HCT116 (cell line): ENCODE measurements at regions of chr1 and their contacts with region 1.

Region 1: DNA sequence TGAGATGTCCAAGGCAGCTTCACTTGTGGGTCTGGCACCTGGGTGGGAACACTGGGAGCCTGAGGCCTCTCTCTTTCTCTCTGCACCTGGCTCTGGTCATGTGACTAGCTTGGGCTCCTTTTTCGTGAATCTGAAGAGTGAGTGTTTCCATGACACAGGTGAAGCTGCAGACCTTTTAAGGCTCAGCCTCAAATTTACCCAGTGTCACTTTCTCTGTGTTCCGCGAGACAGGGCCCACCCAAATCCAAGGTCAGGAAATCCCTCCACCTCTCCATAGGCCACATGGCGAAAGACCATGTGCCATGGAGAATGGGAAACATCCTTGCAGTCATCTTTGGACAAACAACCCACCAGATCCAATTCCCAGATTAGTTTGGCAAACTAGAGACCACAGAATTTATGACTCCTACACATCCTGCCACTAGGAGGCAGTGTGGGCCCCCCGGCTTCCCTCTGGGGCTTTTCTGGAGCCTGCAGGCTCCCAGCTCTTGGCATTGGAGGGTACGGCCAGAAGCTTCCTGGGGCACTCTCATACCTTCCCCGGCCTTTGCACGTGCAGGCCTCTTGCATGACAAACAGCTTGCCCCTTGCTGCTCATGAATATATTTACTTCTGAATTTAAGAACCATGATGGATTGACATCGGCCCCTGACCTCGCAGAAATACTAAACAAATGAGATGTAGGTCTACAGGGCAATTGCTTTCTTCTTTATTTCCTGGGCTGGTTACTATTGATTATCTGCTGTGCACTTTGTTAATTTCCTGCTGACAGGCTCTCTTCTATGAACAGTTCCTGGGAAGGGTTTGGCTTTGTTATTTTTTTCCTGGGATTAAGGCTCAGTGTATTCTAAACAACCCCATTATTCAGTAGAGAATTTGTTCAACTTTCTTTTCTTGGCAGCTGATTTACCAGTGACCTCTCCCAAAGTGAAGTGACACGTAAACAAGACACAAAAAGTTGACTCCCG is 180.7 kb downstream of the KAZN start:
- DNase-seq: peak; percentile 21
- ATAC-seq: peak; percentile 83
- H3K4me3 ChIP-seq: no peak overlapping the region
- H3K27ac ChIP-seq: no peak overlapping the region
- H3K4me1 ChIP-seq: no peaks in the 10 kb centered on the region
- H3K27me3 ChIP-seq: no peaks in the 10 kb centered on the region
- CTCF ChIP-seq: peak; percentile 74 to 92 (median 90)
- POLR2A ChIP-seq: no peak
- RAD21 ChIP-seq: peak; percentile 69

Region 2: GRCh38 chr1:14765773-14766172 is 13.4 kb before region 1 on chr1:
- CTCF ChIA-PET with region 1: interaction called, 12 read pairs
- POLR2A ChIA-PET with region 1: no interaction called
- RAD21 ChIA-PET with region 1: no interaction called
- intact Hi-C with region 1: no loop called
- DNase-seq: no peak
- ATAC-seq: peak; percentile 40; the same call in 1 of the 2 replicates
- H3K4me3 ChIP-seq: no peak overlapping the region
- H3K27ac ChIP-seq: no peak overlapping the region
- H3K4me1 ChIP-seq: peaks cover 0 to 5% of the 10 kb centered on the region in 2 experiments; a peak in 1 of 4 replicates
- H3K27me3 ChIP-seq: peaks cover 20% of the 10 kb centered on the region; the same call in 1 of the 2 replicates
- CTCF ChIP-seq: no peak
- POLR2A ChIP-seq: no peak
- RAD21 ChIP-seq: no peak

Region 3: GRCh38 chr1:15028102-15028501 is 248.9 kb after region 1 on chr1:
- CTCF ChIA-PET with region 1: interaction called, 12 read pairs
- POLR2A ChIA-PET with region 1: no interaction called
- RAD21 ChIA-PET with region 1: interaction called in 1 of 2 experiments, 3 read pairs
- intact Hi-C with region 1: loop called (anchors 2 kb)
- DNase-seq: no peak
- ATAC-seq: peak; percentile 34; the same call in 1 of the 2 replicates
- H3K4me3 ChIP-seq: no peak overlapping the region
- H3K27ac ChIP-seq: no peak overlapping the region
- H3K4me1 ChIP-seq: peaks cover 6 to 23% of the 10 kb centered on the region in 2 experiments; a peak in 3 of 4 replicates
- H3K27me3 ChIP-seq: no peaks in the 10 kb centered on the region
- CTCF ChIP-seq: no peak
- POLR2A ChIP-seq: no peak
- RAD21 ChIP-seq: no peak

Region 4: DNA sequence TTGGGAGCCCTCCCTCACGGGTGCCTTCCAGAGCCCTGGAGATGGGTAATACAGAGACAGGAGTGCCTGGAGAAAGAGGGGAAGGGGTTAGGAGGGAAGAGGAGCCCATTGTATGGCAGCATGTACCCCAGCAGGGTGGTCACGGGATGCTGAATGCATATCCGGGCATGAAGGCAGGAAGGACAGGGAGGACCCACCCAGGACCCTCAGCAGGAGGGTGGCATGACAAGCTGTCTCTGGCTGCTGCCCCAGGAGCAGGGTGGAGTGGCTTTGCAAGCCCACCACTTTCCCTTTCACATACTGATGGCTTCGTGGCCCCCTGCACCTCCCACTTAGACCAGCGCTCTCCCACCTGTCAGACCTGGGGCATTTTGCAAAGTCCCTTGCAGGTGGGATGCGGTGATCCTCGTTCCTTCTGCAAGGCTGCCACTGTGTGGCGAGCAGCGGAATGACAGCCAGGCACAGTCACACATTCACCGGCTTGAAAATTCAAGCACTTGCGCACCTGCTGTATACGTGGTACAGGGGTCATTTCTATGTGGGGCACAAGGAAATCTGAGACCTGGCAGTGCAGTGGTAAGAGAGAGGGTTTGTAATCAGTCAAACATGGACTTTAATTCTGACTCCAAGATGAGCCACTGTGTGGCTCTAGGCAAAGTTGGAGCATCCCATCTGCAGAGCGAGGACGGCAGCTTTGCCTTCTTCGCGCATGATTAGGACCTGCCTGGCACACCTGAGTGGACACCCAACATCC is 321.1 kb after region 1 on chr1:
- CTCF ChIA-PET with region 1: no interaction called
- POLR2A ChIA-PET with region 1: no interaction called
- RAD21 ChIA-PET with region 1: no interaction called
- intact Hi-C with region 1: loop called (anchors 10 kb)
- DNase-seq: peak; percentile 37
- ATAC-seq: peak; percentile 93
- H3K4me3 ChIP-seq: no peak overlapping the region
- H3K27ac ChIP-seq: no peak overlapping the region
- H3K4me1 ChIP-seq: no peaks in the 10 kb centered on the region
- H3K27me3 ChIP-seq: peaks cover 12% of the 10 kb centered on the region; the same call in 1 of the 2 replicates
- CTCF ChIP-seq: peak; percentile 81 to 98 (median 97)
- POLR2A ChIP-seq: no peak
- RAD21 ChIP-seq: peak; percentile 97

Region 5: GRCh38 chr1:16226490-16227179 is 1447.5 kb after region 1 on chr1:
- CTCF ChIA-PET with region 1: no interaction called
- POLR2A ChIA-PET with region 1: no interaction called
- RAD21 ChIA-PET with region 1: no interaction called
- intact Hi-C with region 1: no loop called
- DNase-seq: no peak
- ATAC-seq: no peak
- H3K4me3 ChIP-seq: no peak overlapping the region
- H3K27ac ChIP-seq: no peak overlapping the region
- H3K4me1 ChIP-seq: peaks cover 0 to 1% of the 10 kb centered on the region in 2 experiments; a peak in 1 of 4 replicates
- H3K27me3 ChIP-seq: no peaks in the 10 kb centered on the region
- CTCF ChIP-seq: no peak
- POLR2A ChIP-seq: no peak
- RAD21 ChIP-seq: no peak